Right lobe of liver (tissue), 6 donors: ENCODE measurements at regions of chr14 and their contacts with region 1.

Region 1: GRCh38 chr14:47442209-47442608 is 233.2 kb downstream of the MDGA2 start:
- DNase-seq: peak in 2 of 3 donors; percentile 35 to 56
- ATAC-seq: peak; percentile 88 to 100 (median 96)
- H3K4me3 ChIP-seq: no peak overlapping the region
- H3K27ac ChIP-seq: no peak overlapping the region
- H3K4me1 ChIP-seq: no peaks in the 10 kb centered on the region
- H3K27me3 ChIP-seq: no peaks in the 10 kb centered on the region
- CTCF ChIP-seq: peak; percentile 51 to 58 (median 51)
- POLR2A ChIP-seq: no peak

Region 2: GRCh38 chr14:47507861-47508260 is 65.7 kb after region 1 on chr14:
- intact Hi-C with region 1: no loop called
- DNase-seq: no peak
- ATAC-seq: no peak
- H3K4me3 ChIP-seq: no peak overlapping the region
- H3K27ac ChIP-seq: no peak overlapping the region
- H3K4me1 ChIP-seq: no peaks in the 10 kb centered on the region
- H3K27me3 ChIP-seq: no peaks in the 10 kb centered on the region
- CTCF ChIP-seq: no peak
- POLR2A ChIP-seq: no peak

Region 3: GRCh38 chr14:47539031-47539461 is 96.8 kb after region 1 on chr14:
- intact Hi-C with region 1: loop called in 1 of 2 experiments (anchors 10 kb)
- DNase-seq: no peak
- ATAC-seq: peak; percentile 79 to 95 (median 82)
- H3K4me3 ChIP-seq: no peak overlapping the region
- H3K27ac ChIP-seq: no peak overlapping the region
- H3K4me1 ChIP-seq: no peaks in the 10 kb centered on the region
- H3K27me3 ChIP-seq: no peaks in the 10 kb centered on the region
- CTCF ChIP-seq: peak; percentile 53 to 71 (median 61)
- POLR2A ChIP-seq: no peak